ENCODE measurements at regions of chr11 and their contacts with region 1.

Region 1: DNA sequence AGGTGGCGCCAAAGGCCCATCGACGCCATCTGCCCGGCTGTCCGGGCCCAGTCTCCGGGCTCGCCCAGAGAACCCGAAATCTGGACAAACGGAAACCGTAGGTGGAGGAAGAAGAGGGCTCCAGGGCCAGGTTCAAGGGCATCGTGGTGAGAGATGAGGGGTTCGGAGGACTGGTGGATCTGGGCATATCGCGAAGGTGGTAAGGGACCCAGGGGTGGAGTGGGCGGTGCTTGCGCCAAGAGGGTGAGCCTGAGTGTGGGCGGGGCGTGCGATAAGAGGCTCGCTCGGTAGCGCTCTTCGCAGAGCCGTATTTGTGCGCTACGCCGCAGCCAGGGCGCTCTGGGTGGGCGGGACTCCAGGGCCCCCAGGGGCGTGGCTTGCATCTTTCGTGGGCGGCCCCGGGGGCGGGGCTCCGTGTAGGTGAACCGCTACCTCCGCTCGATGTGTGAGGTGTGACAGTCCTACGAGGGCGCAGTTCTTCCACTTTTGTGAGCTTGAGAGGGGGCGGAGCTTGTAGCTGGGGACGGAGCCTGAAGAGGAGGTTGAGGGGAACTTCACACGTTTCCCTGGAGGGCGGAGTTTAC is 4.8 kb downstream of the CD248 start:
- DNase-seq: peak; percentile 95 to 96
- ATAC-seq: peak; percentile 89
- H3K4me3 ChIP-seq: peak overlapping the region in 1 of 2 donors; percentile 62
- H3K27ac ChIP-seq: peak overlapping the region in 1 of 2 donors; percentile 62
- H3K4me1 ChIP-seq: no peaks in the 10 kb centered on the region
- H3K27me3 ChIP-seq: no peaks in the 10 kb centered on the region

Region 2: GRCh38 chr11:66328307-66329144 is 16.5 kb after region 1 on chr11:
- intact Hi-C with region 1: loop called in 1 of 2 experiments (anchors 1 kb)
- DNase-seq: peak; percentile 80 to 91
- ATAC-seq: peak; percentile 83
- H3K4me3 ChIP-seq: no peak overlapping the region
- H3K27ac ChIP-seq: no peak overlapping the region
- H3K4me1 ChIP-seq: no peaks in the 10 kb centered on the region
- H3K27me3 ChIP-seq: no peaks in the 10 kb centered on the region

Region 3: GRCh38 chr11:66388756-66389386 is 76.8 kb after region 1 on chr11:
- intact Hi-C with region 1: loop called in 1 of 2 experiments (anchors 1 kb)
- DNase-seq: peak in 1 of 2 donors; percentile 72
- ATAC-seq: no peak
- H3K4me3 ChIP-seq: no peak overlapping the region
- H3K27ac ChIP-seq: no peak overlapping the region
- H3K4me1 ChIP-seq: no peaks in the 10 kb centered on the region
- H3K27me3 ChIP-seq: no peaks in the 10 kb centered on the region

Region 4: GRCh38 chr11:67099831-67100324 is 787.8 kb after region 1 on chr11:
- intact Hi-C with region 1: no loop called
- DNase-seq: peak in 1 of 2 donors; percentile 30
- ATAC-seq: no peak
- H3K4me3 ChIP-seq: no peak overlapping the region
- H3K27ac ChIP-seq: no peak overlapping the region
- H3K4me1 ChIP-seq: no peaks in the 10 kb centered on the region
- H3K27me3 ChIP-seq: no peaks in the 10 kb centered on the region

Measured in aorta (tissue), 5 donors.